Tibial artery (tissue), 4 donors: ENCODE measurements at regions of chr9 and their contacts with region 1.

Region 1: DNA sequence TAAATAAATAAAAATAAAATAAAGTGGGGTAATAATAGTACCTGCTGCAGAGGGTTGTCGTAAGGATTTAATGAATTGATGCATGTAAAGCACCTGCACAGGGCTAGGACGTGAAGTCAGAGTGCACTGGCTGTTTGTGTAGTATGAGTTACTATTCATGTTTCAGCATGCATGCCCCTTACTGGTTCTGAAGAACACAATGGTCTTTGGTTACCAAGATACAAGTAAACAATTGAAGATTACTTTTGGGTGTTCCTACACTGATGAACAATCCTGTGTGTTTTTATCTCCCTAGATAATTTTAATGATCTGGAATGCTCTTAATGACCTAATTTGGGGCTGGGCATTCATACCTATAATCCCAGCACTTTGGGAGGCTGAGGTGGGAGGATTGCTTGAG is 23.2 kb upstream of the PRRC2B start:
- DNase-seq: no peak
- H3K4me3 ChIP-seq: no peak overlapping the region
- H3K27ac ChIP-seq: no peak overlapping the region
- H3K4me1 ChIP-seq: peaks cover 0 to 12% (median 4%) of the 10 kb centered on the region in 4 donors
- H3K27me3 ChIP-seq: no peaks in the 10 kb centered on the region
- CTCF ChIP-seq: no peak

Region 2: DNA sequence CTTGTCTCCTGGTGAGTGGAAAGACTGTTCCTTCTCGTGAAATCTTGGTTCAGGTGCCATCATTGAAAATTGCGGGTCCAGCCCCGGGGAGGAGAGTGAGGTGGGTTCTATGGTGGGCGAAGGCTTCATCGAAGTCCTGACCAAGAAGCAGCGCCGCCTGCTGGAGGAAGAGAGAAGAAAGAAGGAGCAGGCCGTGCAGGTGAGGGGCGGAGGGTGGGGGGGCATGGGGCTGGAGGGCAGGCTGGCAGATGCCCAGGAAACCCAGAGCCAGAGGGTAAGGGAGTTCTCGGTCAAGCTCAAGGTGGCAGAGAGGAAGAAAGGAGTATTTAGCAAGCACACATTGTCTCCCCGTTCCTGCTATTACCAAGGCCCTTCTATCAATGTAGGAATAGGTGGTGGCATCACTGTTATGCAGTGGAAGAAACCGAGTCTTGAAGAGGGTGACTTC is 107.8 kb after region 1 on chr9:
- intact Hi-C with region 1: loop called (anchors 10 kb)
- DNase-seq: no peak
- H3K4me3 ChIP-seq: no peak overlapping the region
- H3K27ac ChIP-seq: no peak overlapping the region
- H3K4me1 ChIP-seq: peaks cover 0 to 18% (median 0%) of the 10 kb centered on the region in 4 donors
- H3K27me3 ChIP-seq: no peaks in the 10 kb centered on the region
- CTCF ChIP-seq: peak; percentile 38 to 50